ENCODE measurements at regions of chr6 and their contacts with region 1.

Region 1: GRCh38 chr6:139996253-139996834 is 621.9 kb upstream of the CITED2 start:
- DNase-seq: peak in 1 of 5 donors; percentile 18
- ATAC-seq: peak in 3 of 4 donors; percentile 37 to 53 (median 41)
- H3K4me3 ChIP-seq: no peak overlapping the region
- H3K27ac ChIP-seq: no peak overlapping the region
- H3K4me1 ChIP-seq: peaks cover 0 to 10% (median under 1%) of the 10 kb centered on the region in 12 donors
- H3K27me3 ChIP-seq: no peaks in the 10 kb centered on the region
- CTCF ChIP-seq: peak in 1 of 12 donors; percentile 8
- POLR2A ChIP-seq: no peak

Region 2: DNA sequence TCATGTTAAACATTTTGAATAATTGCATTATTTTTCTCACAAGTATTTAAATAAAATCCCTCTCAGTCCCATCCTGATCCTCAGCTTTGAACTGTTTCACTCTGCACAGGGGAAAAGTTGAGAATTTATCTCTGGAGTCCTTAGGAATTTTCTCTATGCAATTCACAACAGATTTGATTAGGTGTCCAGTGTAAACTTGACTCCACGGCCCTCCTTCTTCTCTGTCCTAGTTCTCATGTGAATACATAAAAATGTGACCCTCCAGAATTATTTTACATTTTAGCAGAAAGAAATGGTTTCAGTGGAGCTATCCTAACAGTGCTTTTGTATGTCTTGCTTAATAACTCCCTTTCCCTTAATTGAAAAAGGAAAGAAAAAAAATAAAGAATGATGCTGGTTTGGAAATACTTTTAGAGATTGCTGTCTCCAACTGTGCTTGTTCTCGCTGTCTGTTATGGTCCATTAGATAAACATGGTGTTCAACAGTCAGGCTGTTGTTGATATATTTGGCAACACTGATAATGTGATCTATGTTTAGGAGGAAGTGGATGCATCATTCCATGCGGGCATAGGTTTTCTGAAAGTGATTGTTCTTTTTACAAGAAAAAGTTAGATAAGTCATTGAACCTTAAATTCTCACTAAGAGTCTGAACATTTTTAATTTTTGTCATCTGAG is 22.5 kb before region 1 on chr6:
- intact Hi-C with region 1: no loop called
- DNase-seq: no peak
- ATAC-seq: peak; percentile 86 to 94 (median 89)
- H3K4me3 ChIP-seq: no peak overlapping the region
- H3K27ac ChIP-seq: peak overlapping the region; percentile 13 to 86 (median 72)
- H3K4me1 ChIP-seq: peaks cover 0 to 27% (median 12%) of the 10 kb centered on the region in 12 donors
- H3K27me3 ChIP-seq: no peaks in the 10 kb centered on the region
- CTCF ChIP-seq: no peak
- POLR2A ChIP-seq: no peak

Region 3: DNA sequence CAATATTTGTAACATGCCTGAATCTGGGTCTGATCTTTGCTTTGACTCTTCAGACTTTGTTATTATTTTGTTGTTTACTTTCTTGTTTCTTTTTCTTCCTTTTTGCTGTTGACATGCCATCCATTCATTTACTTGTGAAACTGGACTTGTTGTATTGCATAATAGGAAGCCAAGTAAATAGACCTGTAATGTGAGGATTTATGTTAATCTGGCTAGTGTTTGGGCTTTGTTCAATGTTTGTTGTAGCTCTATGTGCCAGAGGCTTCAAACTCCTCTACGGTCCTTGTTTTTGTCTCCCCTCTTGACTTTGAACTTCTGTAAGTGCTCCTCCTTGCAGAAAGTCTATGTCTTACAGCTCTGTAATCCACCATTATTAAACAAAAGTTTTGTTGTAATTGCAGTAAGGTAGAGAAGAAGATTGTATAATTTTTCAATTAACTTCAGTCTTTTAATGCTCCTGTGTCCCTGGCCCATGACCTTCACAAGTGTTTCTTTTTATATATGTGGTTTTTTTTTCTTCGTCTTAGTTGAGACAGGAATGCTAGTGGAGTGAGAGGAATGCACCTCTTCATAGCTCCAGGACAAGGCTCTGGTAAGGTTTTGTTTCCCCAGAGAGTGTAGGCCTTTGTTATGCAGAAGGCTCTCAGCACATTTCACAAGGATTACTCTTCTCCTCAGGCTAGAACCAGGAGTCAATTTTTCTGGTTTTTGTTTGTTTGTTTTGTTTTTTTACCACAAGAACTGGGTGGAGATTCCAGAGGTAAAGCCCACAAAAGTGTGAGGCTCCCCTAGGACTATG is 439.9 kb after region 1 on chr6:
- intact Hi-C with region 1: loop called in 1 of 10 experiments (anchors 10 kb)
- DNase-seq: no peak
- ATAC-seq: no peak
- H3K4me3 ChIP-seq: no peak overlapping the region
- H3K27ac ChIP-seq: no peak overlapping the region
- H3K4me1 ChIP-seq: peaks cover 0 to 26% (median 10%) of the 10 kb centered on the region in 12 donors
- H3K27me3 ChIP-seq: no peaks in the 10 kb centered on the region
- CTCF ChIP-seq: no peak
- POLR2A ChIP-seq: no peak